Dendritic cell treated with granulocyte-macrophage colony-stimulating factor and Interleukin-4, amounts not matched to agents 40 ng/mL and 50 ng/mL, for 4 days (primary cell): ENCODE measurements at regions of chr6 and their contacts with region 1.

Region 1: GRCh38 chr6:20417819-20418218 is 16.1 kb downstream of the E2F3 start:
- H3K4me3 Mint-ChIP-seq: no peak overlapping the region
- H3K27ac Mint-ChIP-seq: peak overlapping the region; percentile 68
- H3K4me1 Mint-ChIP-seq: peaks cover 82% of the 10 kb centered on the region
- H3K27me3 Mint-ChIP-seq: no peaks in the 10 kb centered on the region

Region 2: GRCh38 chr6:20427856-20428255 is 10.0 kb after region 1 on chr6:
- intact Hi-C with region 1: loop called (anchors 1 kb)
- H3K4me3 Mint-ChIP-seq: no peak overlapping the region
- H3K27ac Mint-ChIP-seq: peak overlapping the region; percentile 70
- H3K4me1 Mint-ChIP-seq: peaks cover 46% of the 10 kb centered on the region
- H3K27me3 Mint-ChIP-seq: no peaks in the 10 kb centered on the region

Region 3: GRCh38 chr6:20680697-20681165 is 262.9 kb after region 1 on chr6:
- intact Hi-C with region 1: no loop called
- H3K4me3 Mint-ChIP-seq: no peak overlapping the region
- H3K27ac Mint-ChIP-seq: no peak overlapping the region
- H3K4me1 Mint-ChIP-seq: peaks cover 9% of the 10 kb centered on the region
- H3K27me3 Mint-ChIP-seq: no peaks in the 10 kb centered on the region

Region 4: GRCh38 chr6:20732896-20733295 is 315.1 kb after region 1 on chr6:
- intact Hi-C with region 1: no loop called
- H3K4me3 Mint-ChIP-seq: no peak overlapping the region
- H3K27ac Mint-ChIP-seq: no peak overlapping the region
- H3K4me1 Mint-ChIP-seq: no peaks in the 10 kb centered on the region
- H3K27me3 Mint-ChIP-seq: no peaks in the 10 kb centered on the region